HCT116 (cell line): ENCODE measurements at regions of chr14 and their contacts with region 1.

Region 1: GRCh38 chr14:20836668-20837338 is 34.2 kb upstream of the RNASE1 start:
- DNase-seq: peak; percentile 66
- ATAC-seq: peak; percentile 88
- H3K4me3 ChIP-seq: no peak overlapping the region
- H3K27ac ChIP-seq: no peak overlapping the region
- H3K4me1 ChIP-seq: peaks cover 0 to 10% of the 10 kb centered on the region in 2 experiments; a peak in 2 of 4 replicates
- H3K27me3 ChIP-seq: no peaks in the 10 kb centered on the region
- CTCF ChIP-seq: peak; percentile 49 to 77 (median 72); a peak in 5 of 6 replicates
- POLR2A ChIP-seq: no peak
- RAD21 ChIP-seq: peak; percentile 65

Region 2: DNA sequence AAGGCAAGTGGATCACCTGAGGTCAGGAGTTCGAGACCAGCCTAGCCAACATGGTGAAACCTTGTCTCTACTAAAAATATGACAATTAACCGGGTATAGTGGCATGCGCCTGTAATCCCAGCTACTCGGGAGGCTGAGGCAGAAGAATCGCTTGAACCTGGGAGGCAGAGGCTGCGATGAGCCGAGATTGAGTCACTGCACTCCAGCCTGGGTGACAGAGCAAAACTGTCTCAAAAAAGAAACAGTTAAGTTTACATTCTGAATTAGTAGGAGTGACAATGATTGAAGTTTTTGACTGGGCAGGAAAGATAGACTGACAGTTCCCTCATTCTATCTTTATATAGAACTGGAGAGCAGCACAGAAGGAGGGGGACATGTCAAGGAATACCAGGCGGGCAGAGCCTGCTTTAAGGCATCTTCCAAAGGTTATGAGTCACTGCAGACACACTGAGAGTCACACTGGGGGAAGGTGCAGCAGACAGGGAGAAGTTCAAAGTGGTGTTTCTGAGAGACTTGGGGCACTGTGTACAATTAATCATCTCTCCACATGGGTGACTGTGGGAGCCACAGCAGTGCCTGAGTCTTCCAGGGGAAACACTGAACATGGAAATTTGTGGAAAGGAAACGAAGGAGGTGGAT is 11.6 kb after region 1 on chr14:
- CTCF ChIA-PET with region 1: interaction called, 17 read pairs
- POLR2A ChIA-PET with region 1: no interaction called
- RAD21 ChIA-PET with region 1: no interaction called
- intact Hi-C with region 1: no loop called
- DNase-seq: peak; percentile 32
- ATAC-seq: peak; percentile 98
- H3K4me3 ChIP-seq: peak overlapping the region; percentile 6 to 33; a peak in 2 of 4 replicates
- H3K27ac ChIP-seq: peak overlapping the region; percentile 36; the same call in 1 of the 2 replicates
- H3K4me1 ChIP-seq: peaks cover 17 to 20% of the 10 kb centered on the region in 2 experiments
- H3K27me3 ChIP-seq: no peaks in the 10 kb centered on the region
- CTCF ChIP-seq: no peak
- POLR2A ChIP-seq: no peak
- RAD21 ChIP-seq: no peak

Region 3: DNA sequence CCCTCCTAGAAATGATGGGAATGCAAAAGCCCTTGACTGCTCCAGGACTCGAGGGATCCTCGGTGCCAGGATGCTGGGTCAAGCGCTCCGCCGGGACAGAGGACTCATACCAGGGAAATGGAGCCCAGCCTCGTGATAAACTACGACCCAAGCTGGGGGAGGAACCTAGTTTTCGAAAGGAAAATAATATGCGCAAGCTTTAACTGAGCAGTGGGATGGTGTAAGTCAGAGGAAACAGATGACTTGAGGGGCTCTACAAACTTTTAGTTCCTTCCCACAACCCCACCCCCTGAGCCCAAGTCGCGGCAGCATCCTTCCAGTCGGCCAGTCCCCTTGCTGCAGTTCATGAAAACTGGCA is 547.7 kb after region 1 on chr14:
- CTCF ChIA-PET with region 1: no interaction called
- POLR2A ChIA-PET with region 1: no interaction called
- RAD21 ChIA-PET with region 1: no interaction called
- intact Hi-C with region 1: no loop called
- DNase-seq: no peak
- ATAC-seq: no peak
- H3K4me3 ChIP-seq: peak overlapping the region; percentile 95 to 100
- H3K27ac ChIP-seq: peak overlapping the region; percentile 87
- H3K4me1 ChIP-seq: peaks cover 7 to 17% of the 10 kb centered on the region in 2 experiments; a peak in 3 of 4 replicates
- H3K27me3 ChIP-seq: no peaks in the 10 kb centered on the region
- CTCF ChIP-seq: no peak
- POLR2A ChIP-seq: no peak
- RAD21 ChIP-seq: no peak